Aorta (tissue), 5 donors: ENCODE measurements at regions of chr18 and their contacts with region 1.

Region 1: DNA sequence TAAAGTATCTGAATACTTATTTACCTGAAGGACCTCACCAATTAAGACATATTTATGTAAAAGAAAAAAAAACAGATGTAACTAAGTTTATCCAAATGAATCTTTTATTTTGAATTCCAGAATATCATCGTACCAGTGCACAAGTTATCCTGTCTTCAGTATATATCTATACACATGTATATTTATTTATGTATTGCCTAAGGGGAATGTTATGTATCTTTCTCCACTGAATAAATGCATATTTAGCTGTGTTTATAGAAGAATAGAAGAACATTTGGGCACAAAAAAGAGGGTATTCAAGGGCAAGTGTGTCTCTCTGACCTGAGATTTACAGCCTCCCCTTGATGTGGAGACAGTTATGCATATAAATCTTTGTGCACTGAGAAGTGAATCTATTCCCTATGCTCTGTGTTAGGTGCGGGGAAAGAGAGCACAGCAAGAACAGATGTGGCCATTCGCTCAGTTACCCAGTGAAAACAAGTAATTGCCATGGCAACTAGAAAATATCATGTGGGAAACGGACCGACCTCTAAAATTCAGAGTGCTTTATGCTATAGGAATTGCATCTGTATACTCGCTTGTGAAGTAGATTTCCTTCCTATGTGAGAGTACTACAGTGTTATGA is 39.5 kb upstream of the ASXL3 start:
- DNase-seq: no peak
- ATAC-seq: no peak
- H3K4me3 ChIP-seq: no peak overlapping the region
- H3K27ac ChIP-seq: no peak overlapping the region
- H3K4me1 ChIP-seq: no peaks in the 10 kb centered on the region
- H3K27me3 ChIP-seq: no peaks in the 10 kb centered on the region

Region 2: DNA sequence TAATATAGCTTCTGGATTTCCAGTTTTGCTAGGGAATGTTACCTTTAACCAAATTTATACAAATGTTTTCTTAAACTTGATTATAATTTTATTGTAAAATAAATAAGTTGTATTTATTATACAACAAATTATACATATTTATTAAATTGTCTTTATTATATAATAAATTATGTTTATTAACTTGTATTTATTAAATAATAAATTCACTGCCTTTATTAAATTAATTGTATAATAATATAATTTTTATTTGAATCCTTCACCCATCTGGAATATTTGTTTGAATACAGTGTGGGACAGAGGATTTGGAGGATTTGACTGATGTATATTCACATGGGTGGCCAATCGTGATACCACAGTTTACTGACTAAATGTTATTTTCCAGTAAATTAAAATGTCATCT is 54.6 kb before region 1 on chr18:
- intact Hi-C with region 1: loop called in 1 of 2 experiments (anchors 5 kb)
- DNase-seq: no peak
- ATAC-seq: no peak
- H3K4me3 ChIP-seq: no peak overlapping the region
- H3K27ac ChIP-seq: no peak overlapping the region
- H3K4me1 ChIP-seq: no peaks in the 10 kb centered on the region
- H3K27me3 ChIP-seq: peaks cover 0 to 2% of the 10 kb centered on the region in 2 donors